Posterior cingulate gyrus (tissue), 11 donors: ENCODE measurements at regions of chr12 and their contacts with region 1.

Region 1: DNA sequence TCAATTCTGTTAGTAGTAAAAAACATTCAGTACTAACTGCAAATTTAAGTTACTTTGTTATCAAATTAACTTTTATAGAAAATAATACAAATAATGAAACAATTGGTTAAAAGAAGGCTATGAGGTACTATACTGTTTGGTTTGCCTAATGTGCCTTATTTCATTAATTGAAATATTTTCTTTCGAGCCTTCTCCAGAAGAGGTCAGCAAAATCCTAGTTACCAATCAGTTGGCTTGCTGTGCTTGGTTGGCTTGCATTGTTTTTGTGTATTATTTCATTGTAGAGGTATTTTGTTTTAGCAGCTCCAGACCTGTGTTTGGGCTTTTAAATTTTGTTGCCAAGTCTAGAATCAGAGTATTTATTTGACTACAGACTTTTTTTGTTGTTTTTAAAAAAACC is 68.5 kb downstream of the AEBP2 start:
- DNase-seq: no peak

Region 2: GRCh38 chr12:19643635-19644034 is 135.8 kb after region 1 on chr12:
- intact Hi-C with region 1: loop called (anchors 2 kb)
- DNase-seq: no peak